A673 (cell line): ENCODE measurements at regions of chr10 and their contacts with region 1.

Region 1: DNA sequence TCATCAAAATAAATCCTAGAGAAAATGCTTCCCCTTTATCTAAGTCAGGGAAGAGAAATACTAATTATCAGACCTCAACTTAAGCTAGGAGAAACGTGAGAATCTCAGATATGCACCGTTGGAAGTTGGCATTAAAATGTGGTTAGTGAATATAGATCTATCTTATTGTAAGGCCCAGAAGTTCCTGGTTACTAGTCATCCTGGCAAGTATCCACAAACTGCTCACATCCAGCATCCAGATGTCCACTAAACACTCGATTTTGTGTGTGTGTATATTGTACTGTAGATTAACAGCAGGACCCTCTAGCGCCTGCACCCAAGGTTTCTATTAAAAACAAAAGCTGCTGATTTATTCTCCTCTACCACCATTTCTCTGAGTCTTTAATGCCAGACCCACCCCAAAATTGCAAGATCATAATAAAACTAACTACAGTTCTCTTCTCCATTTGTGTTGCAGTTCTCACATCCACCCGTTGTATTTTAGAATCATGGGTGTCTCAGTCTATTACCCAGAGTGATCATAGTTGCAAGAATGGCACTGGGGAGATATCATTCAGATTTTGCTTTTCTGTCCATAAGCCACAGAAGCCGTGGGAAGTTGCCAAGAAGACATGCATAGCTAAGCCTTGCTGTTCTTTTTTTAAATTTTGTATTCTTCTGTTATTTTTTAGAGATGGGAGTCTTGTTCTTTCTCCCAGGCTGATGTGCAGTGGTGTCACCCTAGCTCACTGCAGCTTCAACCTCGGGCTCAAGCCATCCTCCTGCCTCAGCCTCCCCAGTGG is 165.4 kb downstream of the KIAA1217 start:
- DNase-seq: no peak
- H3K4me3 ChIP-seq: no peak overlapping the region
- H3K27ac ChIP-seq: peak overlapping the region; percentile 31
- H3K4me1 ChIP-seq: peaks cover 35% of the 10 kb centered on the region
- H3K27me3 ChIP-seq: no peaks in the 10 kb centered on the region
- CTCF ChIP-seq: no peak

Region 2: GRCh38 chr10:23338178-23338828 is 1036.0 kb before region 1 on chr10:
- CTCF ChIA-PET with region 1: no interaction called
- POLR2A ChIA-PET with region 1: no interaction called
- intact Hi-C with region 1: no loop called
- DNase-seq: no peak
- H3K4me3 ChIP-seq: no peak overlapping the region
- H3K27ac ChIP-seq: no peak overlapping the region
- H3K4me1 ChIP-seq: peaks cover 24% of the 10 kb centered on the region
- H3K27me3 ChIP-seq: no peaks in the 10 kb centered on the region
- CTCF ChIP-seq: no peak

Region 3: GRCh38 chr10:24215196-24215595 is 159.1 kb before region 1 on chr10:
- CTCF ChIA-PET with region 1: no interaction called
- POLR2A ChIA-PET with region 1: interaction called, 14 read pairs
- intact Hi-C with region 1: no loop called
- DNase-seq: no peak
- H3K4me3 ChIP-seq: no peak overlapping the region
- H3K27ac ChIP-seq: peak overlapping the region; percentile 23
- H3K4me1 ChIP-seq: peaks cover 14% of the 10 kb centered on the region
- H3K27me3 ChIP-seq: no peaks in the 10 kb centered on the region
- CTCF ChIP-seq: no peak